Activated CD8-positive, alpha-beta T cell treated with anti-CD3 and anti-CD28 coated beads, Interleukin-2, amount 10 ng/mL, durations not matched to agents 7 days and 5 days (primary cell): ENCODE measurements at regions of chr1 and their contacts with region 1.

Region 1: DNA sequence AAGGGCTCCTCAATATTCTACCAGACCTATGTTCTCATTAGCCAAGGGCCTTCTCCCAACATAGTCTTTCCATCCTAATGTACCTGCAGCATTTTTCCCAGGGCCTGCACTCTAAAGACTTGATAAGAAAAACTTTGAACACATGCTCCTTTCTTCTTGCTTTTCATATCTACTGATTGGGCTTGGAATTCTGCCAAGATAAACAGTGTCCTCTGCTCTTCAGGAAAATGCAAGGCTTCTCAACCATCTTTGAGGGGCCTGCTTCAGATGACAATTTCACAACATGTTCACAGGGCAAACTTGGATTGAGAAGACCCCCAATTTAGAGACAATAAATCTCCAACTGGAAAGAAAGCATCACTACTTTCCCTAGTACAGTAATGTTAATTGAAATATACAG is 25.8 kb upstream of the PPT1 start:
- DNase-seq: no peak
- ATAC-seq: no peak
- H3K4me3 Mint-ChIP-seq: no peak overlapping the region
- H3K27ac Mint-ChIP-seq: no peak overlapping the region
- H3K4me1 Mint-ChIP-seq: no peaks in the 10 kb centered on the region
- H3K27me3 Mint-ChIP-seq: peaks cover 24% of the 10 kb centered on the region

Region 2: GRCh38 chr1:40143891-40144575 is 21.2 kb after region 1 on chr1:
- CTCF ChIA-PET with region 1: interaction called, 12 read pairs
- POLR2A ChIA-PET with region 1: no interaction called
- DNase-seq: peak; percentile 67
- ATAC-seq: peak; percentile 73
- H3K4me3 Mint-ChIP-seq: no peak overlapping the region
- H3K27ac Mint-ChIP-seq: no peak overlapping the region
- H3K4me1 Mint-ChIP-seq: peaks cover 3% of the 10 kb centered on the region
- H3K27me3 Mint-ChIP-seq: peaks cover 45% of the 10 kb centered on the region

Region 3: DNA sequence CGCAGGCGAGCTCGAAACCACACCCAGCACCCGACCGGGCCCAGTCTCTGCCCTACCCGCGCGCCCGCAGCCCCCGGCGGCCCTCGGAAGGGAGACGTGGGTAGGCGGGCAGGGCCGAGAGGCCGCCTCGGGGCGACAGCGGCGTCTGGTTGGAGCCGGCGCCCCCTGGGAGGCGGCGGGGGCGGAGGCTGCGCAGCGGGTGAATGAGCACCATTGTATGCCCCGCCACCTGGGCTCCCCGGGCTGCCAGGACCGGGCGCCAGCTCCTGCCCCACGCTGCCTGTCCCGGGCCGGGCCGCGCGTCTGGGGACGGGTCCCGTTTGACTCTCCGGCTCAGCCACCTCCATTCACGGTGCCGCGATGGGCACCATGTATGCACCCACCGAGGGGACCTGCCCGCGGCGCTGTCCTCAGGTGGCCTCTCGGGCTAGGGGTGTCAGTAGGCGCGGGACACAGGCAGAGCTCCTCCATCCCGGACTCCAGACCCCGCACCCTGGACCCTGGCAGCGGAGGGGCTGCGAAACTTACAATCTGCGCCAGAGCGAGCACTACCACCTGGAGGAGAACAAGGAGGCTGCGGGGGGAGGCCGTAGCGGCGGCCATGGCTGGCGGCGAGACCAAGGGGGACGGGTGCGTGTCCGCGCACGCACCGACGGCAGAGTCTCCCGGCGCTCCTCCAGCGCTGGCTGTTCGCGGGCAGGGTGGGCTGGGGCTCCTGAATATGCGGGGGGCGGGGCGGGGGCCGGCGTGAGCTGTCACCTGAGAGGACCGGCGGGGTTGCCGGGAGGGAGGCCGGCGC is 193.9 kb after region 1 on chr1 and contains the start of gene COL9A2:
- CTCF ChIA-PET with region 1: no interaction called
- POLR2A ChIA-PET with region 1: no interaction called
- DNase-seq: peak; percentile 47
- ATAC-seq: peak; percentile 56
- H3K4me3 Mint-ChIP-seq: peak within 1 kb of the TSS; percentile 74
- H3K27ac Mint-ChIP-seq: no peak within 1 kb of the TSS
- H3K4me1 Mint-ChIP-seq: peaks cover 52% of the 10 kb centered on the region
- H3K27me3 Mint-ChIP-seq: peaks cover 27% of the 10 kb centered on the region
- total RNA-seq, gene COL9A2: 2.4 to 2.5 TPM